Calu3 (cell line): ENCODE measurements at regions of chr19 and their contacts with region 1.

Region 1: GRCh38 chr19:18112989-18113478 is 15.5 kb downstream of the MAST3 start:
- DNase-seq: peak; percentile 89
- H3K4me3 Mint-ChIP-seq: no peak overlapping the region
- H3K27ac Mint-ChIP-seq: no peak overlapping the region
- H3K4me1 Mint-ChIP-seq: peaks cover 19% of the 10 kb centered on the region
- H3K27me3 Mint-ChIP-seq: no peaks in the 10 kb centered on the region
- CTCF ChIP-seq: peak; percentile 57

Region 2: DNA sequence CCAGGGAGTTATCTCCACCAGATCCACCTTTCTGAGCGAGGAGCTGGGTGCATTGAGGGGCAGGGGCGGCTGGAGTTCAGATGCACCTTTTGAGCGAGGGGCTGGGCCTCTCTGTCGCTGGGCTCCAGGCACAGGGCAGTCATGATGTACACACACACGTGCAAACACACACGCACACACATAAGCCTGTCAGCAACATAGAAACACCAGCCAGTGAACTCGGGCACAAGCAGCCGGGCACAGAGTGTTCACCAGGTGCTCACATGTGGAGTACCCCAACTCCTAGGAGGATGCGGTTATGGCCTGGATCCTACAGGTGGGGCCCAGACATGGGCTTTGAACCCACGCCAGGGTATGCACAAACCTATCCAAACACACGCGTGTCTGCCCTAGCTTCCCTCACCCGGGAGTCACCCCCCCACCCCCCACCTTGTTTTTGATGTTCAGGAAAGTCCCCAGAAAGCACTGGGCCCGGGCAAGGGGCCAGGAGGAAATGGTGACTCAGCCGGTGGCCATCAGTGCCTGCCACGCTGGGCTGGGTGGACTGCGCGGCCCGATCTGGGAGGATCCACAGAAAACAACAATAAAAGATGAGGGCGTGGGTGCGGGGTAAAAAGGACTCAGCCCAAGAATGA is 91.8 kb before region 1 on chr19:
- CTCF ChIA-PET with region 1: no interaction called
- intact Hi-C with region 1: no loop called
- DNase-seq: peak; percentile 83
- H3K4me3 Mint-ChIP-seq: no peak overlapping the region
- H3K27ac Mint-ChIP-seq: peak overlapping the region; percentile 82
- H3K4me1 Mint-ChIP-seq: peaks cover 31% of the 10 kb centered on the region
- H3K27me3 Mint-ChIP-seq: no peaks in the 10 kb centered on the region
- CTCF ChIP-seq: no peak

Region 3: GRCh38 chr19:18152444-18152816 is 39.4 kb after region 1 on chr19:
- CTCF ChIA-PET with region 1: interaction called, 20 read pairs
- intact Hi-C with region 1: loop called (anchors 5 kb)
- DNase-seq: peak; percentile 89
- H3K4me3 Mint-ChIP-seq: peak overlapping the region; percentile 90
- H3K27ac Mint-ChIP-seq: peak overlapping the region; percentile 96
- H3K4me1 Mint-ChIP-seq: peaks cover 27% of the 10 kb centered on the region
- H3K27me3 Mint-ChIP-seq: no peaks in the 10 kb centered on the region
- CTCF ChIP-seq: no peak

Region 4: GRCh38 chr19:18167975-18168645 is 55.1 kb after region 1 on chr19:
- CTCF ChIA-PET with region 1: interaction called, 14 read pairs
- intact Hi-C with region 1: no loop called
- DNase-seq: peak; percentile 56
- H3K4me3 Mint-ChIP-seq: no peak overlapping the region
- H3K27ac Mint-ChIP-seq: no peak overlapping the region
- H3K4me1 Mint-ChIP-seq: no peaks in the 10 kb centered on the region
- H3K27me3 Mint-ChIP-seq: no peaks in the 10 kb centered on the region
- CTCF ChIP-seq: peak; percentile 57